Cardiac septum (tissue), 1 donor: ENCODE measurements at regions of chr2 and their contacts with region 1.

Region 1: GRCh38 chr2:741195-741496 is 63.9 kb upstream of the TMEM18 start:
- DNase-seq: no peak

Region 2: GRCh38 chr2:55587-56448 is 685.3 kb before region 1 on chr2:
- intact Hi-C with region 1: no loop called
- DNase-seq: no peak

Region 3: DNA sequence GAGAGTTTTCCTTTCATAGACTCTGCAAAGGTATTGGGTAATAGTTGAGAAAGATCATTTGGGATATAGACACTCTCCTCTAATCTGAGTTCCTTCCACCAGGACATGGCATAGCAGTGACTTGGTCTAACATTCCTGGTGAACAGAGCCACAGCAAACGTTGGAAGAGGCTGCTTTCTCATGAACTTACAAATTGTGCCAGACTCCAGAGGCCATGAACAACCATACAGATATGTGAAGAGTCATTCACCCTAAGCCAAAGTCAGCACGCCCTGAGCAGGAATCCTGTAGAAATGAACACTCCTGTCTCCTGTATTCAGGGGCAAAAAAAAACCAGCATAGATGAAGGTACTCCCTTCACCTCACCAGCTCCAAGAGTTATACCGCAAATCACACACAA is 216.7 kb before region 1 on chr2:
- intact Hi-C with region 1: no loop called
- DNase-seq: no peak

Region 4: GRCh38 chr2:677966-678550 is 63.1 kb before region 1 on chr2:
- intact Hi-C with region 1: loop called (anchors 2 kb)
- DNase-seq: no peak